Dendritic cell treated with granulocyte-macrophage colony-stimulating factor and Interleukin-4, amounts not matched to agents 40 ng/mL and 50 ng/mL, for 4 days (primary cell): ENCODE measurements at regions of chr20 and their contacts with region 1.

Region 1: DNA sequence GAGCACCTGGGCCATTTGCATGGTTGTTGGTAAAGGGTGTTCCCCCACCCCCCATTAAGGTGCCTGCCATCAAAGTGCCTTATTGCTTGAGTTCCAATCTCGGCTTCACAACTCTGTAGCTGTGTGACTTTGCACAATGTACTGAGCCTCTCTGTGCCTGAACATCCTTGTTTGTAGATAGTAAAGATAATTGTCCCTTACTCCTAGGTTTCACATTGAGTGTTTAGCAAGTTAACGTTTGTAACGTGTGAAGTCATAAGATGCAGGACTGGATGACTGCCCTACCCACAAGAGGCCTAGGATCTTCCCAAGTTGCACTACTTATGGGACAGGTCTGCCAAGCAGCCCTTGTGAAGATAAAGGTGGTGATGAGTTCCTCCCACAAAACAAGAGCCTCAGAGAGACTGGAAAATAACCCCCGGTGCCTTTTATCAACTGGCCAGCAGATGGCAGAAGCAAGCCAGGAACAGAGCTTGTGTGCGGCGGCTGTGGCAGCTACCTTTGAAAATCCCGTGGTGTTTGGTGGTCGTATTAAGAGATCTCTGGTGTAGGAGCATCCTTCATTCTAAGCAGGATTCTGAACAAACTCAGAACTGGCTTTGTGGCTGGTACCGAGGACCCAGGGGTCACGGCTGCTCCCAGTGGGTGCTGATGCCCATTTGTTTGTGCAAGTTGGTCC is 99.0 kb downstream of the CDH26 start:
- H3K4me3 Mint-ChIP-seq: peak overlapping the region; percentile 21
- H3K27ac Mint-ChIP-seq: peak overlapping the region; percentile 81
- H3K4me1 Mint-ChIP-seq: peaks cover 77% of the 10 kb centered on the region
- H3K27me3 Mint-ChIP-seq: no peaks in the 10 kb centered on the region

Region 2: DNA sequence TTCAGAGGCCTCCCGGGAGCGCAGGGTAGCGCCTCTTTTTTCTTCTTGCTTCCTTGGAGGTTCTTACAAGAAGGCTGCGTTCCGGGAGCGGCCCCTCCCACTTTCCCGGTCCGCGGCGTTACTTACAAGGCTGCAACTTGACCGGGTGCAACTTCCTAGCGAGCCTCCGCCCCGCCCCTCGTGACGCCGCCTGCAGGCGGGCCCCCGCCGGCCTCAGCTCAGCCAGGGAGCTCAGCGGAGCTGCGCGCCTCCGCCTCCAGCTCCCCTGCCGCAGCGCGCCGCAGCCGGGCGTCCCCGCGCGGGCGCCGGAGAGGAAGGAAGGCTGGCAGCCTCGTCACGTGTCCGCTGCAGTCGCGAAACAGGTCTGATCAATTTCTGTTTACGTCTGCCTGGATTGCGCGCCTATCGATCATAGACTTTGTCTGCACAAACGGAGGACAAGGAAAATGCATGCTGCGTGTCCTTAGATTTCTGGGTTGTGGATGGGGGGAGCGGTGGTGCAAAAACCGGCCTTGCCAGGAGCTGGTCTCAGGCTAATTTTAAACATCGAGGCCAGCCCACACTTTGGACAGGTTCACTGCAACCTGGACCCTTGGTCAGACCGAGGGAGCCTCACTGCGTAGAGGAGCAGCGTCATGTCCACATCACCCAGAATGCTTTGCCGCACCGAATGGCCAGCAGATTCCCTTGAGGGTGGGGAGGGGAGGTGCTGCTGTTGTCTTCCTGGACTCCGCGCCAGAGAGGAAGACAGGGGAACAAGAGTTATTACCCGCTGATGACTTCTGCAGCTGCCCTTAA is 116.9 kb before region 1 on chr20 and contains the starts of genes FAM217B and PPP1R3D:
- intact Hi-C with region 1: loop called (anchors 10 kb)
- H3K4me3 Mint-ChIP-seq: peak within 1 kb of the TSS; percentile 95
- H3K27ac Mint-ChIP-seq: peak within 1 kb of the TSS; percentile 100
- H3K4me1 Mint-ChIP-seq: peaks cover 42% of the 10 kb centered on the region
- H3K27me3 Mint-ChIP-seq: no peaks in the 10 kb centered on the region

Region 3: DNA sequence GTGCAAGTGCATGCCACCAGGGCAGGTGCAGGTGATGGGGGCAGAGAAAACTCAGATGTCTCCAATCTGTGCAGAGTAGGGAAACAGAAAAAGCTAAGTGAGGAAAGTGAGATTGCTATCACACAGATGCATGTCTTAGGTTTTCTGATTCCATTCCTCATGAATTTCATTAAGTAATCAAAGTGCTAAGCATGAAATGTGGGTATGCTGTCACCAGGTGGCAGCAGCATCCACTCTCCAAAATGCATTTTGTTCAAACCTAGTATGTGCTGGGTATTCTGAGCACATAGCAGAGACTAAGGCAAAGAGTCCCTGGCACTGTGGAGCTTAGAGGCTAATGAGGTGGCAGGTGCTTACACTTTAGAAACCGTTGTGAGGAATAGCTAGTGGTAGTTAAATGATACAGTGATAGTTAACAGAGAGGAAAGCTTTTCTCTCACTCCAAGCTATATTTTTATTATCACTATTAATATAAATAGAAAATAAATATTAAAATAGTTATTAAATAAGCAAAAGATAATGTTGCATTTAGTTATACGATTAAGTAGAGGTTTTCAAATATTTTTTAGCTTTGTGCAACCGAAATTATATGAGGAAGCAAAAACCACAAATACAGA is 80.5 kb after region 1 on chr20:
- intact Hi-C with region 1: loop called (anchors 2 kb)
- H3K4me3 Mint-ChIP-seq: peak overlapping the region; percentile 75
- H3K27ac Mint-ChIP-seq: peak overlapping the region; percentile 83
- H3K4me1 Mint-ChIP-seq: peaks cover 69% of the 10 kb centered on the region
- H3K27me3 Mint-ChIP-seq: no peaks in the 10 kb centered on the region

Region 4: DNA sequence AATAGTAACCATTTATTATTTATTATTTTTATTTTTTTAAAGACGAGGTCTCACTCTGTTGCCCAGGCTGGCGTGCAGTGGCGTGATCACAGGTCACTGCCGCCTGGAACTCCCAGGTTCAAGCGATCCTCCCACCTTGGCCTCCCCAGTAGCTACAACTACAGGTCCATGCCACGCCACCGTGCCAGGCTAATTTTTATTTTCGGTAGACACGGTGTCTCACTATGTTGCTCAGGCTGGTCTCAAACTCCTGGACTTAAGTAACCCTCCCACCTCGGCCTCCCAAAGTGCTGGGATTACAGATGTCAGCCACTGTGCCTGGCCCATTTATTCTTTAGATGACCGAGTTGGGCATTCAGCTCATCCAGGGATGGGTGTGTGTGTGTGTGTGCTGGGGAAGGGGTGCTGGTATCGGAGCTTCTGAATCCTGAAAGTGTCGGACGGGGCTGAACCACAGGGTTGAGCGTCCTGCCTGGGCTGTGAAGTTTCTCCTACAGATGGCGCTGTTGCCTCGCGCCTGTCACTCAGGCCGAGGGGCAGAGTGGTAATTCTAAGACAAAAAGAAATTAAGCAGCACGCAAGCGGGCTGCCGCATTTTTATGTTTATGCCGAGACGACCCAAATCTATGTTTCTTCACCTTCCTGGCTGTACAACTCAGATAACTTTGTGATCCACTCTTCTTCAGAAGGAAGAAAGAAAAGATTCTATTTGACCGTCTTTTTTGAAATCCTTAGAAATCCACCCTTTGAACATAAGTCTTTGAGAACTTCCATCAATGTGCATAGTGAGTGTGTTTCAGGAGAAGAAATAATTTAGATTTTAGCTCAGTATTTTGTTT is 153.7 kb after region 1 on chr20:
- intact Hi-C with region 1: loop called (anchors 5 kb)
- H3K4me3 Mint-ChIP-seq: peak overlapping the region; percentile 44
- H3K27ac Mint-ChIP-seq: no peak overlapping the region
- H3K4me1 Mint-ChIP-seq: peaks cover 10% of the 10 kb centered on the region
- H3K27me3 Mint-ChIP-seq: no peaks in the 10 kb centered on the region

Region 5: DNA sequence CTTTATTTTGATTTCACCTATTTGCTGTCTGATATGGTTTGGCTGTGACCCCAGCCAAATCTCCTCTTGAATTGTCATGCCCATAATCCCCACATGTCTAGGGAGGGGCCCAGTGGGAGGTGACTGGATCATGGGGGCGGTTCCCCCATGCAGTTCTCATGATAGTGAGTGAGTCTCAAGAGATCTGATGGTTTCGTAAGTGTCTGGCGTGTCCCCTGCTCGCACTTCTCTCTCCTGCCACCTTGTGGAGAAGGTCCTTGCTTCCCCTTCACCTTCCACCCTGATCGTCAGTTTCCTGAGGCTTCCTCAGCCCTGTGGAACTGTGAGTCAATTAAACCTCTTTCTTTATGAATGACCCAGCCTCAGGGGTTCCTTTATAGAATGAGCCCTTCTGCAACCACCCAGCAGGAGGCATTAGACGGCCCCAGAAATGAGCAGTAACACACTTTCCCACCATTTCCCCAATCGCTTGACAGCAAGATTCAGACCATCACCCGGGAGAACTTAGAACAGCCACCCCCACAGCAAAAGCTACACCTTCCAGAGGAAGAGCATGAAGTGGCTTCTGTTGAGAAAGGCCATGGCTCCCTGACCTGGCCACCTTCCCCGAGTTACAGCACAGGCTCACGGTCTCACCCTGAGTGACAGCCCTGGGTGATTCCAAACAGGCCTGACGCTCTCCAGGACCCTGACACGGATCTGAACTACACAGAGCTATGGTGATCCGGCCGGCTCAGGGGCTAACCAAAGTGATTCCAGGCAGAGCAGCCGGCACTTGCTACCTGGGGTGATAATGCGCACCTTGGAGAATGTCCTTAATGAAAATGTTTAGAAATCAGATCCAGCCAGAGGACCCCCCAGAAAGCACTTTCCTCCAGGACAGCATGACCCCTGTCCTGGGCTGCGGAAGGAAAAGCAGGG is 1063.6 kb after region 1 on chr20:
- intact Hi-C with region 1: loop called (anchors 5 kb)
- H3K4me3 Mint-ChIP-seq: no peak overlapping the region
- H3K27ac Mint-ChIP-seq: no peak overlapping the region
- H3K4me1 Mint-ChIP-seq: peaks cover 15% of the 10 kb centered on the region
- H3K27me3 Mint-ChIP-seq: peaks cover 21% of the 10 kb centered on the region